Activated CD8-positive, alpha-beta T cell treated with anti-CD3 and anti-CD28 coated beads for 36 hours (primary cell): ENCODE measurements at regions of chr12 and their contacts with region 1.

Region 1: DNA sequence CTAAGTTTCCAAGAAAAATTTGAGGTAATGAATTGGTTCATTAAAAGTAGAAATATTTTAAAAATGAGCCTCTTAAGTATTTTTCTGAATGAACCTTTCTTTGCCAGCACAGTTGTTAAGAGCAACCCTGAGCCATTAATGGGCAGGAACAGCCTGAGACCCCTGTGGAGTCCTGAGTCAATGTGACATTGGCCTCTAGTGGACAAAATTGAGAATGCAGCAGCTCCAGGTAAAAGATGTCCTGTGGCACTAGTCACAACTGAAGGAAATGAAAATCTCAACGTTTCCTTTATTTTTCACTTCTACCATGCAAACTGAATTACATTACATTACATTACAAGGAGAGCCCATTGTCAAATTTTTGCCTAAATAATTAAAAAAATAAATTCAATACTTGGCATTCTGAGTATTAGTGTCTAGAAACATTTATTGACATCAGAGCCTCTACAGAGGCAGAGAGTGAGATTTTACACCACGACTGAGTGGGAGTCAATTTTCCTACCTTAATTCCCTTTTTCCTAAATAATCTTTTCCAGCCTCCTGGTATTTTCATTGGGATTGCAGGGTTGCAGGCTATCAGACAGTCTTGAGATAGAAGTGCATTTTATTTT is 135.7 kb downstream of the PPM1H start:
- DNase-seq: peak; percentile 77
- ATAC-seq: peak; percentile 99
- H3K4me3 Mint-ChIP-seq: no peak overlapping the region
- H3K27ac Mint-ChIP-seq: no peak overlapping the region
- H3K4me1 Mint-ChIP-seq: no peaks in the 10 kb centered on the region
- H3K27me3 Mint-ChIP-seq: peaks cover 3% of the 10 kb centered on the region
- CTCF ChIP-seq: peak; percentile 95

Region 2: DNA sequence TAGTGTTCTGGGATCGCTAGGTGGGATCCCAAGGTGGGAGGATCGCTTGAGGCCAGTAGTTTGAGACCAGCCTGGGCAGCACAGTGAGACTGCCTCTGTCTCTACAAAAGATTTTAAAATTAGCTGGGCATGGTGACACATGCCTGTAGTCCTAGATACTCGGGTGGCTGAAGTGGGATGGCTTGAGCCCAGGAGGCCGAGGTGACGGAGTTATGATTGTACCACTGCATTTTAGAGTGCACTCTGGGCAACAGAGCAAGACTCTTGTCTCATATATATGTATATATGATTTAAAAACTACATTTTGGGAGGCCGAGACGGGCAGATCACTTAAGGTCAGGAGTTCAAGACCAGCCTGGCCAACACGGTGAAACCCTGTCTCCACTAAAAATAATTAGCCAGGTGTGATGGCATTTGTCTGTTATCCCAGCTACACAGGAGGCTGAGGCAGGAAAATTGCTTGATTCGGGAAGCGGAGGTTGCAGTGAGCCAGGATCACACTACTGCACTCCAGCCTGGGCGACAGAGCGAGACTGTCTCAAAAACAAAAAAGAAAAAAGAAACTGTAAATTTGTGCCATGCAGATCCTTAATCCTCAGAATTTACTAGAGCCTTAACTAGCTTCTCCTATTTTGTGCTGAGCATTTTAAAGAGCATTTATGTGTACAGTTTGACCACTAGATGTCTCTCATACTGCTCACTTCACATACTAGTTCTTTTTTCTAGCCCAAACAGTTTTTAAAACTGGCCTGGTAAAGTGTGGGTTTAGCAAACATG is 217.8 kb before region 1 on chr12:
- CTCF ChIA-PET with region 1: interaction called, 123 read pairs
- POLR2A ChIA-PET with region 1: no interaction called
- intact Hi-C with region 1: loop called (anchors 2 kb)
- DNase-seq: no peak
- ATAC-seq: peak; percentile 65
- H3K4me3 Mint-ChIP-seq: no peak overlapping the region
- H3K27ac Mint-ChIP-seq: no peak overlapping the region
- H3K4me1 Mint-ChIP-seq: no peaks in the 10 kb centered on the region
- H3K27me3 Mint-ChIP-seq: no peaks in the 10 kb centered on the region
- CTCF ChIP-seq: peak; percentile 68

Region 3: DNA sequence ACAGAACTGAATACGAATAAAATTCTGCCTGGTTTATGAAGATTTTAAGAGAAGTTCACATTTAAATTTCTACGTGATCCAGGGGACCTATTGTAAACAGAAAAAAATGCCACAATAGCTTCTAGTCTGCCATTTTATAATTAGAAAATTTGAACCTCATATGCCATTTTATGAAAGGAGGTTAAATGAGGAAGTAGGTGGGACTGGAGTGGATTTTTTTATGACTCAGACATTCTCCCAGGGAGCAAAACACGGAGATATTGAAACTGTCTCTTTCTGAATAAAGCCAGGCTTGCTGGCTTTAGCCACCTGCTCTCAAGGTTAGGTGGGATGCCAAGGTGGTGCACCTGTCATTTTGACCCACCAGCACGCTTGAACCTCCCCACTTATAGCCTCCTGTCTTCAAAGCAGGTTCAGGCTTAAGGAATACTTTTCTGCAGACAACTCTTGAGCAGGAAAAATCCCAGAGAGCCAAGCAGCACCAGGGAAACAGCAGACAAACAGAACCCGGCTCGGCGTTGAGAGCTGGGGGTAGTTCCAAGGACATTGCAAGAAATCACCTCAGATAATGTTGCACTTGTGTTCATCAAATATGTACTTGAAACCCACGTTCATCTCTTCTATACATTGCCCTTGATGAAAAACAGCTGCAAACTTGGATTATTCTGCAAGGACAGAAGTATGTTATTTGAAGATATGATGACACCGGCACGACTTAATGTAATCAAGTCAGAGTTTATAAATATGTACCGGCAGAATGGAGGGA is 68.0 kb before region 1 on chr12:
- CTCF ChIA-PET with region 1: no interaction called
- POLR2A ChIA-PET with region 1: no interaction called
- intact Hi-C with region 1: no loop called
- DNase-seq: no peak
- ATAC-seq: no peak
- H3K4me3 Mint-ChIP-seq: no peak overlapping the region
- H3K27ac Mint-ChIP-seq: no peak overlapping the region
- H3K4me1 Mint-ChIP-seq: peaks cover 9% of the 10 kb centered on the region
- H3K27me3 Mint-ChIP-seq: peaks cover 3% of the 10 kb centered on the region
- CTCF ChIP-seq: no peak

Region 4: DNA sequence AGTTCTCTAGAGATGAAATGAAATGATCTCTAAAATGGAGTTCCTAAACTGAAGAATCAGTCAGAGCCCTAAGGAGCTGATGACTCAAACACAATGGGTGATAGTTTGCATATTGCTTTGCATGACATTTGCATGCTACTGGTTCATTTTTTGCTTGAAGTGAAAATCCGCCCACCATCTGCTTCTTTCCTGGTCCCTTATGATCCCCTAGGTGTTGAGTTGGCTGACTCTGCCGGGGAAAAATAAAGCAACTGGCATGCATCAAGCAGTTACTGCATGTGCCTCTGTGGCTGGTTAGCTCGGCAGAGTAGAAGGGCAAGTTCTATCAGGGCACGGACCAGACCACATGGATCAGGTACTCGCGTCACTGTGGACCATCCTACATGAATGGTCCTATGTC is 15.3 kb before region 1 on chr12:
- CTCF ChIA-PET with region 1: interaction called, 24 read pairs
- POLR2A ChIA-PET with region 1: no interaction called
- intact Hi-C with region 1: no loop called
- DNase-seq: no peak
- ATAC-seq: no peak
- H3K4me3 Mint-ChIP-seq: no peak overlapping the region
- H3K27ac Mint-ChIP-seq: no peak overlapping the region
- H3K4me1 Mint-ChIP-seq: peaks cover 11% of the 10 kb centered on the region
- H3K27me3 Mint-ChIP-seq: peaks cover 7% of the 10 kb centered on the region
- CTCF ChIP-seq: no peak

Region 5: DNA sequence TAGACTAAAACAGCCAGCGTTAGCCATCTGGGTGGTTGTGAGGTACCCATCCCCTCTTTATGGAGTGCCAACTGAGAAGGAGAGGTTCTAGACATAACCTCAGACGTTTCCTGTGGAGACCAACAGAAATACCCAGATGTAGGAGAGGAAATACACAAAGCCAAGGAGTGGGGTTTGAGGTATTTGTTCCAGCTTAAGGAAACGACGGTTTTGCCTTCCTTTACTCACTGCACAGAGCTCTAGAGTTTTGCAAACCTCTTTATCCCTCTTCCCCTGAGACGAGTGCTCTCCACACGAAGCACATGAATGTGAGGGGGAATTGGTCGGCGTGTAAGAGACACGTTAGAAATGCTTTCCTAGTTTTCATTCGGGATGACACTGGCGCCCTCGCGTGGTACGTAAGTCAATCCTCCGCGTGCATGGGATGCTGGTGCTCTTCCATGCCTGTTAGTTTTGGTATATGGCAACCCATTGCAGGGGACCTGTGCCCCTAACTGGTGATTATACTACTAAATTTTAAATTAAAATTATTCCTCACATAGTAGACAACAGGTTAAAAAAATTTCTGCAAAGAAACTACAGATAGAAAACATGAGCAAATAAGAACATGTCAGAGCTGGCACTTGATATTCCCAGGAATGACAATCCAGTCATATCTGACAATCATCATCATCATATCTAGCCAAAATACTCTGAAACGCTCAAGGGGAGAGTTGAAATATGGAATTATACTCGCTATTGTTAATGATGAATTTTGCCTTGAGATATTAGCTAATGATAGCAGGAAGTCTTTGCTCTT is 14.0 kb after region 1 on chr12:
- CTCF ChIA-PET with region 1: interaction called, 25 read pairs
- POLR2A ChIA-PET with region 1: no interaction called
- intact Hi-C with region 1: no loop called
- DNase-seq: peak; percentile 63
- ATAC-seq: peak; percentile 22
- H3K4me3 Mint-ChIP-seq: peak overlapping the region; percentile 23
- H3K27ac Mint-ChIP-seq: no peak overlapping the region
- H3K4me1 Mint-ChIP-seq: peaks cover 16% of the 10 kb centered on the region
- H3K27me3 Mint-ChIP-seq: peaks cover 15% of the 10 kb centered on the region
- CTCF ChIP-seq: peak; percentile 58

Region 6: GRCh38 chr12:63103494-63104131 is 304.4 kb after region 1 on chr12:
- CTCF ChIA-PET with region 1: no interaction called
- POLR2A ChIA-PET with region 1: no interaction called
- intact Hi-C with region 1: no loop called
- DNase-seq: peak; percentile 6
- ATAC-seq: no peak
- H3K4me3 Mint-ChIP-seq: no peak overlapping the region
- H3K27ac Mint-ChIP-seq: no peak overlapping the region
- H3K4me1 Mint-ChIP-seq: no peaks in the 10 kb centered on the region
- H3K27me3 Mint-ChIP-seq: no peaks in the 10 kb centered on the region
- CTCF ChIP-seq: peak; percentile 90